T-cell (primary cell): ENCODE measurements at regions of chr14 and their contacts with region 1.

Region 1: GRCh38 chr14:23631702-23632460 is 4.3 kb upstream of the DHRS2 start:
- DNase-seq: peak; percentile 26 to 81 (median 59)
- ATAC-seq: peak; percentile 78 to 87 (median 84)
- H3K4me3 ChIP-seq: peak overlapping the region; percentile 15 to 41
- H3K4me3 Mint-ChIP-seq: peak overlapping the region; percentile 58 to 69 (median 63)
- H3K27ac ChIP-seq: no peak overlapping the region
- H3K27ac Mint-ChIP-seq: peak overlapping the region; percentile 1 to 44
- H3K4me1 ChIP-seq: peaks cover 0 to 9% of the 10 kb centered on the region in 2 experiments
- H3K4me1 Mint-ChIP-seq: peaks cover 7 to 11% (median 11%) of the 10 kb centered on the region in 3 donors
- H3K27me3 ChIP-seq: peaks cover 0 to 3% of the 10 kb centered on the region in 2 experiments
- H3K27me3 Mint-ChIP-seq: no peaks in the 10 kb centered on the region

Region 2: DNA sequence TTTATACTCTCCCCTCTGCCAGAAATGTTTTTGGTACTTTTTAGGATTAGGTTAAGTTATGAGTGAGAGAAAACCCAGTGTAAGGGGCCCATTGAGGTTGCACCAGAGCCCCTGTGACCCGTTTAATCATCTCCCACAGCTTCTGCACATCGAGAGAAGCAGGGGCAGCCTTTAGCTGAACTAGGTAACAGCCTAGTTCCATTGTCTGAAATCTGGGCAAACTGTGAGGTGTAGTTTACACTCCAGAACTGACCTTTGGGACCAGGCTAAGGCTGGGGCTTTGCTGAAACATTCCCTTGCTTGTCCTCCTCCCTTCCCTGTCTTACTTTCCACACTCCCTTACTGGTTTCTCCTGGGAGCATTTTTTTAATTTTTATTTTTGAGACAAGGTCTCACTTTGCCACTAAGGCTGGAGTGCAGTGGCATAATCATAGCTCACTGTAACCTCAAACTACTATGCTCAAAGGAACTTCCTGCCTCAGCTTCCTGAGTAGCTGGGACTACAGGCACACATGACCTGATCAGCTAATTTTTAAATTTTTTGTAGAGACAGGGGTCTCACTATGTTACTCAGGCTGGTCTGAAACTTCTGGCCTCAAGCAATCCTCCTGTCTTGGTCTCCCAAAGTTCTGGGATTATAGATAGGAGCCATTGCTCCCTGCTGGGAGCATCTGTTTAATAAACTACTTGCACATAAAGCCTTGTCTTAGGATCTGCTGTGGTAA is 21.6 kb before region 1 on chr14:
- CTCF ChIA-PET with region 1: interaction called, 11 to 16 read pairs
- POLR2A ChIA-PET with region 1: no interaction called
- DNase-seq: peak in 6 of 35 experiments; percentile 1 to 46 (median 10)
- ATAC-seq: peak; percentile 92 to 98 (median 96)
- H3K4me3 ChIP-seq: no peak overlapping the region
- H3K4me3 Mint-ChIP-seq: peak overlapping the region; percentile 58 to 68 (median 59)
- H3K27ac ChIP-seq: peak overlapping the region; percentile 78
- H3K27ac Mint-ChIP-seq: peak overlapping the region; percentile 99 to 100
- H3K4me1 ChIP-seq: peaks cover 13 to 25% of the 10 kb centered on the region in 2 experiments
- H3K4me1 Mint-ChIP-seq: peaks cover 35 to 42% (median 37%) of the 10 kb centered on the region in 3 donors
- H3K27me3 ChIP-seq: no peaks in the 10 kb centered on the region
- H3K27me3 Mint-ChIP-seq: no peaks in the 10 kb centered on the region

Region 3: DNA sequence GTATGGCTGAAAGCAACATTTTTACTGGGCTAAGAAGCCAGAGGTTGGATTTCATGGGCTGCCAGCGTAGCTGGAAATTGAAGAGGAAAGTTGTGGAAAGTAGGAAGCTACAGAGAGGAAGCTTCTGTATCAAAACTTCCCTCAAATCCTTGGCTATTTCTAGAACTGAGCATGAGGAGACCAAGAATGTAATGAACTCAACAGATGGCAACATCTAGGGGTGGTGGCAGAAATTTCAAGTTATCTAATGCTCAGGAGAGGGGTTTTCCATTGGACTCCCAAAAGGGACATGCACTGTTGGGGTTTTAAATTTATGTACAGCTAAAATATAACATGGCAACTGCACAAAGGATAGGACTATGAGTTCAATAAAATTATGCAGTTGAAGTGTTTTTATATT is 155.6 kb after region 1 on chr14:
- CTCF ChIA-PET with region 1: interaction called in 1 of 2 experiments, 5 read pairs
- POLR2A ChIA-PET with region 1: interaction called in 1 of 2 experiments, 16 read pairs
- DNase-seq: no peak
- ATAC-seq: no peak
- H3K4me3 ChIP-seq: no peak overlapping the region
- H3K4me3 Mint-ChIP-seq: no peak overlapping the region
- H3K27ac ChIP-seq: no peak overlapping the region
- H3K27ac Mint-ChIP-seq: no peak overlapping the region
- H3K4me1 ChIP-seq: no peaks in the 10 kb centered on the region
- H3K4me1 Mint-ChIP-seq: no peaks in the 10 kb centered on the region
- H3K27me3 ChIP-seq: no peaks in the 10 kb centered on the region
- H3K27me3 Mint-ChIP-seq: peaks cover 12 to 58% of the 10 kb centered on the region in 2 donors